ENCODE measurements at regions of chr1 and their contacts with region 1.

Region 1: GRCh38 chr1:11318982-11319381 is 46.0 kb downstream of the UBIAD1 start:
- DNase-seq: no peak
- ATAC-seq: no peak
- H3K4me3 ChIP-seq: no peak overlapping the region
- H3K27ac ChIP-seq: no peak overlapping the region
- H3K4me1 ChIP-seq: no peaks in the 10 kb centered on the region
- H3K27me3 ChIP-seq: peaks cover 0 to 44% (median 18%) of the 10 kb centered on the region in 7 donors
- CTCF ChIP-seq: no peak

Region 2: DNA sequence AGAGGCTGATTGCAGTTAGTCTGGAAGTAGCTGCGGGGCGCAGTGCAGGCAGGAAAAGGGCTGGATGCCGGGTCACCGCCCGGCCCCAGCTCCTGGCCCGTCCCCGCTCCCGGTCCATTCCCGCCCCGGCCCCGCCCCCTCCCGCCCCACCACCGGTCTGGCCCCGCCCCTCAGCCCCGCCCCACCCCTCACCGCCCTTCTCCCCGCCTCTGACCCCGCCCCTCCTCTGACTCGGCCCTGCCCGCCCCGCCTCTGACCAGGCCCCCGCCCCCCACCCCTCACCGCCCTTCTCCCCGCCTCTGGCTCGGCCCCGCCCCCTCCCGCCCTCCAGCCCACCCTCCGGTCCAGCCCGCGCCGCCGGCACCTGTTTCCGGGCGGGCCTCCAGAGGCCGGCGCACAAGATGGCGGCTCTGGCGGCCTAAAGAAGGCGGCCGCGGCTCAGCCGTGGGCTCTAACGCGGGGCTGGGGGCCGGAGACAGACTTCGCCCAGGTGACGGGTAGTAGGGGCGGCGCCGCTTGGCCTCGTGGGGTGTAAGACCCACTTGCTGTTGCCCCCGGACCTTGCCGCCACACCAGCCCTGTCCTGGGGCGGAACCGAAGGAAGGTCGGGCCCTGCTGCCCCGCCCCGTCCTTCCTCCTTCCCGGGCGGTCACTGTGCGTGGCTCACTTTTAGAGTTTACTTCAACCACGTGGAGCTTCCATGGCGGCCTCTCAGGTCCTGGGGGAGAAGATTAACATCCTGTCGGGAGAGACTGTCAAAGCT is 46.0 kb before region 1 on chr1 and contains the start of gene UBIAD1:
- intact Hi-C with region 1: loop called in 1 of 10 experiments (anchors 1 kb)
- DNase-seq: peak; percentile 89 to 90
- ATAC-seq: peak; percentile 94 to 97 (median 96)
- H3K4me3 ChIP-seq: peak within 1 kb of the TSS; percentile 52 to 98 (median 85)
- H3K27ac ChIP-seq: peak within 1 kb of the TSS; percentile 85 to 99 (median 97)
- H3K4me1 ChIP-seq: peaks cover 4 to 40% (median 34%) of the 10 kb centered on the region in 9 donors
- H3K27me3 ChIP-seq: no peaks in the 10 kb centered on the region
- CTCF ChIP-seq: peak in 2 of 9 donors; percentile 46 to 51
- total RNA-seq, gene UBIAD1: 10.0 to 17.4 (median 11.9) TPM

Measured in heart right ventricle (tissue), 16 donors.